ENCODE measurements at regions of chr13 and their contacts with region 1.

Region 1: DNA sequence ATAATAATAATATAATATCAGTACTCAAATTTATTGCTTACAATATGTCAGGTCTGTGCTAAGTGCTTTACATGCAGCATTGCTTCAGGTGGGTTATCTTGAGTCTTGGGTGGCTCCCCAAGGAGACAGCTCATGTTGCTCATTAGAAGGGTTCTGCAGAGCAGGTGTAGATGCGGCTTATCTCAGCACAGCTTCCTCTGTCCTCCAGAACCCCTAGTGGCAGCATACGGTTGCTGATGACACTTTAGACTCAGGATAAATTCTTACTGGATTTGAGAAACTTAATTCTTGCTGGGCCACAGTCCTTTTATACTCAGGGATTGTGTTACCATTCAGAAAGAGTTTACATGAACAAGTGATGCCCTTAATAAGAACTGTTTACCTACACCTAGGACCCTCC is 8.9 kb downstream of the COG3 start:
- DNase-seq: peak in 6 of 14 experiments; percentile 4 to 60 (median 22)
- ATAC-seq: peak; percentile 89
- H3K4me3 ChIP-seq: no peak overlapping the region
- H3K4me3 Mint-ChIP-seq: peak overlapping the region; percentile 45
- H3K27ac ChIP-seq: no peak overlapping the region
- H3K27ac Mint-ChIP-seq: no peak overlapping the region
- H3K4me1 ChIP-seq: peaks cover 12% of the 10 kb centered on the region
- H3K4me1 Mint-ChIP-seq: peaks cover 67% of the 10 kb centered on the region
- H3K27me3 ChIP-seq: no peaks in the 10 kb centered on the region
- H3K27me3 Mint-ChIP-seq: no peaks in the 10 kb centered on the region
- CTCF ChIP-seq: peak; percentile 31

Region 2: GRCh38 chr13:44523146-44524015 is 950.2 kb before region 1 on chr13:
- CTCF ChIA-PET with region 1: no interaction called
- POLR2A ChIA-PET with region 1: no interaction called
- intact Hi-C with region 1: no loop called
- DNase-seq: no peak
- ATAC-seq: no peak
- H3K4me3 ChIP-seq: no peak overlapping the region
- H3K4me3 Mint-ChIP-seq: no peak overlapping the region
- H3K27ac ChIP-seq: no peak overlapping the region
- H3K27ac Mint-ChIP-seq: no peak overlapping the region
- H3K4me1 ChIP-seq: no peaks in the 10 kb centered on the region
- H3K4me1 Mint-ChIP-seq: no peaks in the 10 kb centered on the region
- H3K27me3 ChIP-seq: no peaks in the 10 kb centered on the region
- H3K27me3 Mint-ChIP-seq: no peaks in the 10 kb centered on the region
- CTCF ChIP-seq: no peak

Region 3: GRCh38 chr13:45393941-45394570 is 79.6 kb before region 1 on chr13:
- CTCF ChIA-PET with region 1: no interaction called
- POLR2A ChIA-PET with region 1: no interaction called
- intact Hi-C with region 1: loop called in 1 of 2 experiments (anchors 5 kb)
- DNase-seq: peak in 8 of 14 experiments; percentile 13 to 71 (median 43)
- ATAC-seq: no peak
- H3K4me3 ChIP-seq: no peak overlapping the region
- H3K4me3 Mint-ChIP-seq: no peak overlapping the region
- H3K27ac ChIP-seq: no peak overlapping the region
- H3K27ac Mint-ChIP-seq: peak overlapping the region; percentile 86
- H3K4me1 ChIP-seq: peaks cover 32% of the 10 kb centered on the region
- H3K4me1 Mint-ChIP-seq: peaks cover 48% of the 10 kb centered on the region
- H3K27me3 ChIP-seq: no peaks in the 10 kb centered on the region
- H3K27me3 Mint-ChIP-seq: no peaks in the 10 kb centered on the region
- CTCF ChIP-seq: peak; percentile 70

Region 4: DNA sequence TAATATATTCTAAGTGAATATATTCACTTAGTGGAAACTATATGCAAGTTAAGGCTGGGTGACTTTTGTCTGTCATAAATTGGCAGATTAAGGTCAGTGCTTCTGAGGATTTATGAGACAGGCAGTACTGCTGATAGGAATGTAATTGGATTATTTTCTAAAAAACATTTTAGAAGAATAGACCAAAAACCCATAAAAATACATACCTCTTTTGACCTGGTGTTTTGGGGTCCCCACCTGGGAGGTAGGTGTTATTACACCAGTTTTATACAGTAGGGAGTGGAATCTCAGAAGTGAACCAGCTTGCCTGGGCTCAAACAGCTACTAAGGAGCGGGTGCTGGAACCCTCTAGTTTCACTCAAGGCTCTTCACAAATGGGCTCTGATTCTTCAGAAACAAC is 16.4 kb after region 1 on chr13:
- CTCF ChIA-PET with region 1: no interaction called
- POLR2A ChIA-PET with region 1: no interaction called
- intact Hi-C with region 1: no loop called
- DNase-seq: peak in 6 of 14 experiments; percentile 2 to 58 (median 39)
- ATAC-seq: peak; percentile 89
- H3K4me3 ChIP-seq: no peak overlapping the region
- H3K4me3 Mint-ChIP-seq: no peak overlapping the region
- H3K27ac ChIP-seq: no peak overlapping the region
- H3K27ac Mint-ChIP-seq: no peak overlapping the region
- H3K4me1 ChIP-seq: no peaks in the 10 kb centered on the region
- H3K4me1 Mint-ChIP-seq: no peaks in the 10 kb centered on the region
- H3K27me3 ChIP-seq: no peaks in the 10 kb centered on the region
- H3K27me3 Mint-ChIP-seq: no peaks in the 10 kb centered on the region
- CTCF ChIP-seq: peak; percentile 66

Measured in CD4-positive, alpha-beta T cell (primary cell).